ENCODE measurements at regions of chr3 and their contacts with region 1.

Region 1: GRCh38 chr3:150183678-150184425 is 213.2 kb upstream of the PFN2 start:
- H3K4me3 ChIP-seq: peak overlapping the region; percentile 37
- H3K27ac ChIP-seq: no peak overlapping the region
- H3K4me1 ChIP-seq: no peaks in the 10 kb centered on the region
- CTCF ChIP-seq: peak; percentile 51; the same call in 1 of the 2 replicates

Region 2: GRCh38 chr3:149967086-149967685 is 216.7 kb before region 1 on chr3:
- CTCF ChIA-PET with region 1: interaction called, 31 read pairs
- POLR2A ChIA-PET with region 1: interaction called, 3 read pairs
- H3K4me3 ChIP-seq: no peak overlapping the region
- H3K27ac ChIP-seq: no peak overlapping the region
- H3K4me1 ChIP-seq: no peaks in the 10 kb centered on the region; the same call in 1 of the 2 replicates
- CTCF ChIP-seq: no peak

Region 3: GRCh38 chr3:150135287-150135721 is 48.5 kb before region 1 on chr3:
- CTCF ChIA-PET with region 1: no interaction called
- POLR2A ChIA-PET with region 1: no interaction called
- H3K4me3 ChIP-seq: no peak overlapping the region
- H3K27ac ChIP-seq: no peak overlapping the region
- H3K4me1 ChIP-seq: no peaks in the 10 kb centered on the region
- CTCF ChIP-seq: no peak

Region 4: DNA sequence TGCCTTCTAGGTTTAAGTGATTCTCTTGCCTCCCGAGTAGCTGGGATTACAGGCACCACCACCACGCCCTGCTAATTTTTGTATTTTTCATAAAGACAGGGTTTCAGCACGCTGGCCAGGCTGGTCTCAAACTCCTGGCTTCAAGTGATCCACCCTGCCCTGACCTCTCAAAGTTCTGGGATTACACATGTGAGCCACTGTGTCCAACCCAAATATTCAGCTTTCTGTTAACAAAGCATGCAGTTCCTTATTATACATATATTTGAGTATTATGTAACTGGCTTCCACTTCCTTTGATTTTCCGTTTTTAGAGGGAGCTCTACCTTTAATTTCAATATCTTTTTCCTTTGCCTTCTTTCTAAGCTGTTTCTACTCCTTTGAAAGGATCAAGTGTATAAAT is 250.4 kb after region 1 on chr3:
- CTCF ChIA-PET with region 1: no interaction called
- POLR2A ChIA-PET with region 1: no interaction called
- H3K4me3 ChIP-seq: no peak overlapping the region
- H3K27ac ChIP-seq: no peak overlapping the region
- H3K4me1 ChIP-seq: no peaks in the 10 kb centered on the region
- CTCF ChIP-seq: no peak

Measured in HEK293 (cell line).